Transverse colon (tissue), 4 donors: ENCODE measurements at regions of chr15 and their contacts with region 1.

Region 1: GRCh38 chr15:62539236-62539635 is 374.2 kb upstream of the C2CD4B start:
- DNase-seq: peak; percentile 48
- H3K4me3 ChIP-seq: no peak overlapping the region
- H3K27ac ChIP-seq: no peak overlapping the region
- H3K4me1 ChIP-seq: peaks cover 0 to 5% (median 1%) of the 10 kb centered on the region in 4 donors
- H3K27me3 ChIP-seq: no peaks in the 10 kb centered on the region
- CTCF ChIP-seq: no peak
- EP300 ChIP-seq: no peak
- POLR2A ChIP-seq: no peak

Region 2: GRCh38 chr15:62378772-62379498 is 160.3 kb before region 1 on chr15:
- in situ Hi-C with region 1: no loop called
- intact Hi-C with region 1: no loop called
- DNase-seq: no peak
- H3K4me3 ChIP-seq: no peak overlapping the region
- H3K27ac ChIP-seq: no peak overlapping the region
- H3K4me1 ChIP-seq: peaks cover 0 to 6% (median 0%) of the 10 kb centered on the region in 4 donors
- H3K27me3 ChIP-seq: no peaks in the 10 kb centered on the region
- CTCF ChIP-seq: no peak
- EP300 ChIP-seq: no peak
- POLR2A ChIP-seq: no peak

Region 3: GRCh38 chr15:62469874-62470688 is 69.2 kb before region 1 on chr15:
- in situ Hi-C with region 1: no loop called
- intact Hi-C with region 1: no loop called
- DNase-seq: no peak
- H3K4me3 ChIP-seq: no peak overlapping the region
- H3K27ac ChIP-seq: peak overlapping the region; percentile 57 to 71 (median 68)
- H3K4me1 ChIP-seq: peaks cover 0 to 48% (median 15%) of the 10 kb centered on the region in 4 donors
- H3K27me3 ChIP-seq: no peaks in the 10 kb centered on the region
- CTCF ChIP-seq: no peak
- EP300 ChIP-seq: no peak
- POLR2A ChIP-seq: no peak

Region 4: GRCh38 chr15:62554164-62554563 is 14.9 kb after region 1 on chr15:
- in situ Hi-C with region 1: no loop called
- intact Hi-C with region 1: loop called (anchors 1 kb)
- DNase-seq: no peak
- H3K4me3 ChIP-seq: no peak overlapping the region
- H3K27ac ChIP-seq: no peak overlapping the region
- H3K4me1 ChIP-seq: peaks cover 0 to 8% (median 4%) of the 10 kb centered on the region in 4 donors
- H3K27me3 ChIP-seq: no peaks in the 10 kb centered on the region
- CTCF ChIP-seq: no peak
- EP300 ChIP-seq: no peak
- POLR2A ChIP-seq: no peak

Region 5: DNA sequence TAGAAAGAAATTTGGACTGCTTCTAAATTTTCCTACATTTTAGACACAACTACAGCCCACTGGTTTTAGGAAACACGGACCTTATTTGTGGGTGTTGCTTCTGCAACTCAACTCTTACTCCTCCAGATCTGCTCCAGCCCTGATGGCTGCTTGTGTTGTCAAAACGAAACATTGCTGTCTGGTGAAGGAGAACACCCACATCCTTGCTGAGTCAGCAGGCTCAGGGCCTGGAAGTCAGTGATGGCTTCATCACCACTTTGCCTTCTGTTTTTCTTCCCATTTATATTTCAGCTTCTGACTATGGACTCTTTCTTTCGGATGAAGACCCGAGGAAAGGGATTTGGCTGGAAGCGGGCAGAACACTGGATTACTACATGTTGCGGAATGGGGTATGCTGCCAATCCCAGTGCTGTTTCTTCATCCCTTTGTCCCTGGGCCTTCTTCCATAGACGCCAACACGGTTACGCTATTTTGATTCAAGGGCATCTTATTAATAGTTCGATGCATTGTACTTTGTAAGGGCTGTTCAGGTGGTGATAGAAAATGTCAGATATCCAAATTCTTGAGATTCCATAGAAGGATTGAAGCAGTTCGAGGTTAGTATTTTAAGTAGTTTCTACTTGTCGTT is 110.7 kb after region 1 on chr15:
- in situ Hi-C with region 1: no loop called
- intact Hi-C with region 1: no loop called
- DNase-seq: no peak
- H3K4me3 ChIP-seq: no peak overlapping the region
- H3K27ac ChIP-seq: no peak overlapping the region
- H3K4me1 ChIP-seq: peaks cover 0 to 11% (median 2%) of the 10 kb centered on the region in 4 donors
- H3K27me3 ChIP-seq: no peaks in the 10 kb centered on the region
- CTCF ChIP-seq: no peak
- EP300 ChIP-seq: no peak
- POLR2A ChIP-seq: no peak

Region 6: DNA sequence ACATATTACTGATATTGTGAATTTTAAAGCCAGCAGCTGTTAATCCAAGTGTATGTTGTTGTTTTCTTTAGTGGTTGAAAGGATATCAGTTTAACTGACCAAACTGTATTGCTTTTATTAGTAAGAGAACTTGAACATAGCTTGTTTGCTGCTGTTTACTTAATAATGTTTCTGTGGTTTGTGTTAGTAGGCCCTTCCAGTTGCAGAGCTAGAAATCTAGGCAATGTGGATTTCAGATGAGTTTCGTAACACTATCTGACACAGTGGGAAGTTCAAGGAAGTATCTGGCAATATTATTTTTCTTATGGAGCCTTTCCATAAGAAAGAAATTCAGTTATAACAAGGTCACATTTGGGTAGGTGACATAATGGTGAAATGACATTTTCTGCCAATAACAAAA is 1939.6 kb after region 1 on chr15:
- in situ Hi-C with region 1: no loop called
- intact Hi-C with region 1: no loop called
- DNase-seq: no peak
- H3K4me3 ChIP-seq: no peak overlapping the region
- H3K27ac ChIP-seq: peak overlapping the region in 1 of 4 donors; percentile 10
- H3K4me1 ChIP-seq: peaks cover 0 to 7% (median 0%) of the 10 kb centered on the region in 4 donors
- H3K27me3 ChIP-seq: no peaks in the 10 kb centered on the region
- CTCF ChIP-seq: no peak
- EP300 ChIP-seq: no peak
- POLR2A ChIP-seq: no peak